ENCODE measurements at regions of chr3 and their contacts with region 1.

Region 1: GRCh38 chr3:58074997-58075396 is 66.8 kb downstream of the FLNB start:
- DNase-seq: no peak
- H3K4me3 ChIP-seq: no peak overlapping the region
- CTCF ChIP-seq: no peak

Region 2: GRCh38 chr3:58130091-58130490 is 55.1 kb after region 1 on chr3:
- in situ Hi-C with region 1: loop called (anchors 5 kb)
- DNase-seq: no peak
- H3K4me3 ChIP-seq: no peak overlapping the region
- CTCF ChIP-seq: no peak

Measured in astrocyte of the cerebellum (primary cell).